Right ventricle myocardium inferior (tissue), 1 donor: ENCODE measurements at regions of chr2 and their contacts with region 1.

Region 1: DNA sequence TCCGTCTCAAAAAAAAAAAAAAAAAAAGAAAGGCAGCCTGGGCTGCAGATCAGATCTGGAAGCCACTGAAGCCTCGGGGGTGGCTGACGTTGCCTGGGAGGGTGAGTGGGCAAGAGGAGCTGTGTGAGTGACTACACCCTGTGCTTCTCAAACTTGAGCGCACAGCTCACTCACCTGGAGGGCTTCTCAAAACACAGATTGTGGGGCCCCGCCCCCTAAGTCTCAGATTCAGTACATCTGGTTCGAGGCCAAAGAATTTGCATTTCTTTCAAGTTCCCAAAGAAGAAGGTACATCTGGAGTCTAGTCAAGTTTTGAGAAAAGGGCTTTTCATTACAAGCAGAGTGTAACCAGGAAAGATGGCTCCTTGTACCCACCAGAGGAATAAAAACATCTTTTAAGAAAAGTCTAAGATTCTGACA is 97.7 kb upstream of the CAB39 start:
- DNase-seq: no peak
- ATAC-seq: no peak

Region 2: DNA sequence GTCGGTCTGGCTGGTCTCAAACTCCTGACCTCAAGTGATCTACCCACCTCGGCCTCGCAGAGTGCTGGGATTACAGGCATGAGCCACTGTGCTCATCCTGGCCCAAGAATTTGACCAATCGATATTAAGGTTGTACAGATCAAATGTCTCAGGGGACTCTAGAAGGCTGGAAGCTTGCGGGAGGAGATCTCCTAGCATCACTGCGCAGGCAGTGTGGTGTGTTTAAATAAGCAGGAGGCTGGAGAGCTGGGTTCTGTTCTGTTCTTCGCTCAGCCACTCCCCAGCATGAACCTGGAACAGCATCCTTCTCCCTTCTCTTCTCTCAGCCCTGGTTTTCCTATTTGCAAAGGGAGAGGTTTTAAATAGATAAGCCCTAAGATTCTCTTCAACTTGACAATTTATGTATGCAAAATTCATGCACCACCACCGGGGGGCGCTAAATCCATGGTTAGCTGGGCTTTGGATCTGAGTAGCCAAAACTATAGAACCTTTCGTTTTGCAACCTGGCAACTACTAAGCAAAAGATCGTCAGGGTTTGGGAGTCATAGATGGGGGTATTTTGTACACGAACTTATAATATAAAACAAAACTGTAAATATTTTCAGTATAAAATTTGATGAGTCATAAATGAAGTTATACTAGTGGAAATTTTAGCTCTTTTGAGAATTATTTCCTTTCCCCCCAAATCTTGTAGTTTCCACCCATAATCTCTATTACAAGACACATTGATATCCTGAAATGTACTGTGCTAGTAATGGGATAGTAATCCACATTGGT is 606.8 kb before region 1 on chr2:
- intact Hi-C with region 1: loop called (anchors 1 kb)
- DNase-seq: peak; percentile 86
- ATAC-seq: peak; percentile 50

Region 3: DNA sequence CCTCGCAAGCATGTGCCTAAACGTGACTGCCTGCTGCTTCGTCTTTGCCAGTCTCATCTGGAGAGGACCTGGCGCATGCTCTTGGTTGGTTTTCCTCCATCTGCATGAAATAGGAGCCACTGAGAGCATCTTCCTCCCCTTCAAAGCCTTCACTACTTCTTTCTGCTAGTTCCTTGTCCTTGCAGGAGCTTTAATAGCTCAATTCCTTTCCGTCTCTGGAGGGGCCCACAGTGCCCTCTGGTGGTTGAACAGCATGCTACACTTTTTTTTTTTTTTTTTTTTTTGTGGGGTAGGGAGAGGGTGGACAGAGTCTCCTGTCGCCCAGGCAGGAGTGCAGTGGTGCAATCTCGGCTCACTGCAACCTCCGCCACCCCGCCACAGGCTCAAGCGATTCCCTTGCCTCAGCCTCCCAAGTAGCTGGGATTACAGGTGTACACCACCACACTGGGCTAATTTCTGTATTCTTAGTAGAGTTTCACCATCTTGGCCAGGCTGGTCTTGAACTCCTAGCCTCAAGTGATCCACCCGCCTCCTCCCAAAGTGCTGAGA is 454.7 kb before region 1 on chr2:
- intact Hi-C with region 1: loop called (anchors 2 kb)
- DNase-seq: peak; percentile 74
- ATAC-seq: peak; percentile 71

Region 4: GRCh38 chr2:230691005-230691647 is 76.2 kb after region 1 on chr2:
- intact Hi-C with region 1: no loop called
- DNase-seq: no peak
- ATAC-seq: no peak